AG04450 (cell line): ENCODE measurements at regions of chr19 and their contacts with region 1.

Region 1: DNA sequence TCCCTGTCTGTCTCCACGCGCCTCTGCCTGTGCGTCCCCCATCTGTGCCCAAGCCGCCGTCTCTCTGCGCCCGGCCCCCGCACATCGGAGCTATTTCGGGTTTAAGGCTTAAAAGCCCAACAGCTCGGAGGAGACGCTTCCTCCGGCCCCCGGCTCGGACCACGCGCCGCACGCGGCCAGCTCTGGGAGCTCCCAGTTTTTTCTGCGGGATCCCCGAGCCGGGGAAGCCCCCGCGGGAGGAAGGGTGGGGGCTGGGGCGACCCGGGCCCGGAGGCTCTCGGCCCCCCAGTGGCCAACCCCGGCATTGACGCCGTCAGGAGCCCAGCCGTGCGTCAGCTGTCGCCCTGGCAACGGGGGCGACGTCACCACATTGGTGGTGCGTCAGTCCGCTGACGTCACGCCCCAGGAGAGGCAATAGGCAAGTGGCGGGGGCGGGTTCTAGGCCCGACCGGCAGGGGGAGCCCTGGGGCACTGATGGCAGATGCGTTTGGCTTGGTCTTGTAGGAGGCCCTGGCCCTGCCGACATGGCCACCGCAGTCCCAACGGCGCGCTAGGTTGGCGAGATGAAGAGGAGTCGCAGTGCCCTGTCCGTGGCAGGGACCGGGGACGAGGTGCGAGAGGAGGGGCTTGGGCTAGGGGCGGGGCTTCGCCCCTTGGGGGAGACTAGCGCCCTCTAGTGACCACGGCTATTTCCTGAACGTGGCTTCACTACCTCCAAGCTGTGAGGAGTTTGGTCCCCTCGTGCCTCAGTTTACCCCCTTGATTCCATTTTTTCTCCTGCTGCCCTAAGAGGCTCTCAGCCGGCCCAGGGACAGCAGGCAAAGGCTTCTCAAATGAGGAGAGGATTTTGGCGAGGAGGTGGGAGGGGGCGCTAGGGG is 3.7 kb upstream of the PDE4A start:
- DNase-seq: peak; percentile 72
- H3K4me3 ChIP-seq: peak overlapping the region; percentile 67
- H3K27ac ChIP-seq: peak overlapping the region; percentile 31
- H3K27me3 ChIP-seq: peaks cover 8% of the 10 kb centered on the region
- CTCF ChIP-seq: peak; percentile 74

Region 2: GRCh38 chr19:10431943-10432735 is 15.5 kb after region 1 on chr19:
- CTCF ChIA-PET with region 1: interaction called, 18 read pairs
- POLR2A ChIA-PET with region 1: interaction called, 4 read pairs
- DNase-seq: no peak
- H3K4me3 ChIP-seq: peak overlapping the region; percentile 68
- H3K27ac ChIP-seq: no peak overlapping the region
- H3K27me3 ChIP-seq: peaks cover 3% of the 10 kb centered on the region
- CTCF ChIP-seq: no peak